ENCODE measurements at regions of chr14 and their contacts with region 1.

Region 1: GRCh38 chr14:92670160-92670559 is 78.3 kb downstream of the LGMN start:
- DNase-seq: no peak
- ATAC-seq: no peak
- H3K4me3 Mint-ChIP-seq: peak overlapping the region; percentile 13
- H3K27ac Mint-ChIP-seq: peak overlapping the region; percentile 52
- H3K4me1 Mint-ChIP-seq: peaks cover 84% of the 10 kb centered on the region
- H3K27me3 Mint-ChIP-seq: no peaks in the 10 kb centered on the region
- CTCF ChIP-seq: no peak

Region 2: GRCh38 chr14:92568621-92569479 is 101.3 kb before region 1 on chr14:
- CTCF ChIA-PET with region 1: interaction called, 3 read pairs
- POLR2A ChIA-PET with region 1: interaction called, 11 read pairs
- intact Hi-C with region 1: no loop called
- DNase-seq: peak; percentile 34
- ATAC-seq: peak; percentile 84
- H3K4me3 Mint-ChIP-seq: peak overlapping the region; percentile 67
- H3K27ac Mint-ChIP-seq: peak overlapping the region; percentile 95
- H3K4me1 Mint-ChIP-seq: peaks cover 36% of the 10 kb centered on the region
- H3K27me3 Mint-ChIP-seq: no peaks in the 10 kb centered on the region
- CTCF ChIP-seq: no peak

Region 3: GRCh38 chr14:92612988-92613658 is 57.0 kb before region 1 on chr14:
- CTCF ChIA-PET with region 1: interaction called, 18 read pairs
- POLR2A ChIA-PET with region 1: interaction called, 28 read pairs
- intact Hi-C with region 1: loop called (anchors 1 kb)
- DNase-seq: peak; percentile 58
- ATAC-seq: peak; percentile 8
- H3K4me3 Mint-ChIP-seq: peak overlapping the region; percentile 46
- H3K27ac Mint-ChIP-seq: peak overlapping the region; percentile 75
- H3K4me1 Mint-ChIP-seq: peaks cover 74% of the 10 kb centered on the region
- H3K27me3 Mint-ChIP-seq: no peaks in the 10 kb centered on the region
- CTCF ChIP-seq: no peak

Region 4: DNA sequence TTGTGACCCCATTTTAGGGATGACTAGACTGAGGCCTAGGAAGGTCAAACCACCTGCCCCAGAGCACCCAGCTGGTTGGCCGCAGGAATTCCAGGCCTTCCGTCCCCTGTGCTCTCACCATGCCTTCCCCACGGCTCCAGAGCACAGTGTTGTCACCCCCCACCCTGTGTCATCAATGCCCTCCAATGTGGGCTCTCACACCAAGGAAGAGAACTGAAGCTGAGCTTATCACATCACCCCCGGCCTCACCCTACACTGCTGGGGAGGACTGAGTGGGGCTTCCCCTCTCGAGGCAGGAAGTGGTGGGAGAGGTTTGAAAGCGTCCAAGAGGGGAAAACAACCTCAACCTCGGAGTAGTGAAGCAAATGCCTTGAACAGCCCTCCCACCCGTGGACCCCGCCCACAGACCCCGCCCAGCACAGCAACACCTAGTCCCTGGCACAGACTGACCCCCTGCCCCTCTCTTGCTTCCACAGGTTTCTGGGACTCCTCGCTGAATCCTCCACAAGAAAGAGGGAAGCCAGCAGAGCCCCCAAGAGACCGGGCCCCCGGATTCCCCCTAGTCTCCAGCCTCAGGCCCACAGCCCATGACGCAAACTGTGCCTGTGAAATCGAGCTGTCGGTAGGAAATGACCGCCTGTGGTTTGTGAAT is 18.9 kb before region 1 on chr14:
- CTCF ChIA-PET with region 1: interaction called, 9 read pairs
- POLR2A ChIA-PET with region 1: interaction called, 144 read pairs
- intact Hi-C with region 1: loop called (anchors 1 kb)
- DNase-seq: peak; percentile 69
- ATAC-seq: peak; percentile 77
- H3K4me3 Mint-ChIP-seq: peak overlapping the region; percentile 98
- H3K27ac Mint-ChIP-seq: peak overlapping the region; percentile 95
- H3K4me1 Mint-ChIP-seq: peaks cover 76% of the 10 kb centered on the region
- H3K27me3 Mint-ChIP-seq: no peaks in the 10 kb centered on the region
- CTCF ChIP-seq: no peak

Region 5: GRCh38 chr14:92704036-92704804 is 34.1 kb after region 1 on chr14:
- CTCF ChIA-PET with region 1: no interaction called
- POLR2A ChIA-PET with region 1: interaction called, 10 read pairs
- intact Hi-C with region 1: no loop called
- DNase-seq: peak; percentile 57
- ATAC-seq: peak; percentile 98
- H3K4me3 Mint-ChIP-seq: peak overlapping the region; percentile 51
- H3K27ac Mint-ChIP-seq: peak overlapping the region; percentile 90
- H3K4me1 Mint-ChIP-seq: peaks cover 60% of the 10 kb centered on the region
- H3K27me3 Mint-ChIP-seq: no peaks in the 10 kb centered on the region
- CTCF ChIP-seq: no peak

Measured in activated B cell treated with CpG ODN at 0.5 μM for 24 hours (primary cell).